SK-N-SH (cell line): ENCODE measurements at regions of chr1 and their contacts with region 1.

Region 1: GRCh38 chr1:62735491-62736171 is 47.4 kb upstream of the DOCK7 start:
- DNase-seq: no peak
- H3K4me3 ChIP-seq: no peak overlapping the region
- H3K27ac ChIP-seq: peak overlapping the region; percentile 50 to 68; a peak in 3 of 4 replicates
- H3K4me1 ChIP-seq: peaks cover 0 to 11% of the 10 kb centered on the region in 2 experiments; a peak in 1 of 4 replicates
- H3K27me3 ChIP-seq: no peaks in the 10 kb centered on the region
- CTCF ChIP-seq: no peak
- EP300 ChIP-seq: peak in 1 of 2 experiments; percentile 25; a peak in 1 of 4 replicates
- RAD21 ChIP-seq: no peak

Region 2: GRCh38 chr1:62722796-62723195 is 12.8 kb before region 1 on chr1:
- CTCF ChIA-PET with region 1: interaction called, 10 read pairs
- POLR2A ChIA-PET with region 1: no interaction called
- DNase-seq: no peak
- H3K4me3 ChIP-seq: no peak overlapping the region
- H3K27ac ChIP-seq: no peak overlapping the region
- H3K4me1 ChIP-seq: peaks cover 20 to 29% of the 10 kb centered on the region in 2 experiments; a peak in 3 of 4 replicates
- H3K27me3 ChIP-seq: no peaks in the 10 kb centered on the region
- CTCF ChIP-seq: no peak
- EP300 ChIP-seq: no peak
- RAD21 ChIP-seq: no peak